ENCODE measurements at regions of chr14 and their contacts with region 1.

Region 1: DNA sequence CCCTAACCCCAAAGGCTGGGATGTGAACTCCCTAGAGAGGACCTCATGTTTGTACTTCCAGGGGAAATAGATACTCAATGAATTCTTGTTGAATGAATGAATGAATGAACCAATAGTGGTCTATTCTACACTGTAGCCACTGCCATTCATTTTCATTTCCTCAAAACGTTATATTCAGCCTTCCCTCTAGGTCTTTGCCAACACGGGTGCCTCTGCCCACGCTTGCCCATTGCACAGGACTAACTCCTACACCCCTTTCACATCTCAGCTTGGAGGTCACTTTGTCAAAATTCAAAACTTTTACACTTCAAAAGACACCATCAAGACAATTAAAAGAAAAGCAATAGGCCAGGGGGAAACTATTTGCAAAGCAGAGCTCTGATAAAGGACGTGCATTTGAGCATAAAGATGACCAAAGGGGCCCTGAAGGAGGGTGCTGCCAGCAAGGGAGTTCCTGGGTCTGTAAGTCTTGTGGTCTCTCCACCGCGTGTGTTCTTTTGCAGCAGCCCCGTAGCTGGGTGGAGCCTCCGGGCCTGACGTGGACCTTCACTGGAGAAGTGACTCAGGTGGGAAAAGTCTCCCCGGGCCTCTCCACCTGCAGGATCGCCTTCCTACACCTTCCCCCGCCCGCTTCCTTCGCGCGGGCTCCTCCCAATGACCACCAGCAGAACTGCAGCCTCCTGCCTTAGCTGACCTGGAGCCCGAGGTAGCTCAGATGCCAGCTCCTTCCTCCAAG is 31.5 kb downstream of the TMEM63C start:
- DNase-seq: no peak
- H3K4me3 ChIP-seq: no peak overlapping the region
- H3K27ac ChIP-seq: no peak overlapping the region
- H3K4me1 ChIP-seq: no peaks in the 10 kb centered on the region
- H3K27me3 ChIP-seq: peaks cover 0 to 2% of the 10 kb centered on the region in 2 experiments
- CTCF ChIP-seq: peak; percentile 41 to 71
- POLR2A ChIP-seq: no peak

Region 2: GRCh38 chr14:77133720-77134338 is 79.3 kb before region 1 on chr14:
- CTCF ChIA-PET with region 1: interaction called, 3 read pairs
- POLR2A ChIA-PET with region 1: no interaction called
- dilution Hi-C with region 1: no loop called
- intact Hi-C with region 1: loop called (anchors 2 kb)
- DNase-seq: peak; percentile 61
- H3K4me3 ChIP-seq: no peak overlapping the region
- H3K27ac ChIP-seq: no peak overlapping the region
- H3K4me1 ChIP-seq: no peaks in the 10 kb centered on the region
- H3K27me3 ChIP-seq: peaks cover 5 to 13% of the 10 kb centered on the region in 2 experiments
- CTCF ChIP-seq: no peak
- POLR2A ChIP-seq: no peak

Region 3: DNA sequence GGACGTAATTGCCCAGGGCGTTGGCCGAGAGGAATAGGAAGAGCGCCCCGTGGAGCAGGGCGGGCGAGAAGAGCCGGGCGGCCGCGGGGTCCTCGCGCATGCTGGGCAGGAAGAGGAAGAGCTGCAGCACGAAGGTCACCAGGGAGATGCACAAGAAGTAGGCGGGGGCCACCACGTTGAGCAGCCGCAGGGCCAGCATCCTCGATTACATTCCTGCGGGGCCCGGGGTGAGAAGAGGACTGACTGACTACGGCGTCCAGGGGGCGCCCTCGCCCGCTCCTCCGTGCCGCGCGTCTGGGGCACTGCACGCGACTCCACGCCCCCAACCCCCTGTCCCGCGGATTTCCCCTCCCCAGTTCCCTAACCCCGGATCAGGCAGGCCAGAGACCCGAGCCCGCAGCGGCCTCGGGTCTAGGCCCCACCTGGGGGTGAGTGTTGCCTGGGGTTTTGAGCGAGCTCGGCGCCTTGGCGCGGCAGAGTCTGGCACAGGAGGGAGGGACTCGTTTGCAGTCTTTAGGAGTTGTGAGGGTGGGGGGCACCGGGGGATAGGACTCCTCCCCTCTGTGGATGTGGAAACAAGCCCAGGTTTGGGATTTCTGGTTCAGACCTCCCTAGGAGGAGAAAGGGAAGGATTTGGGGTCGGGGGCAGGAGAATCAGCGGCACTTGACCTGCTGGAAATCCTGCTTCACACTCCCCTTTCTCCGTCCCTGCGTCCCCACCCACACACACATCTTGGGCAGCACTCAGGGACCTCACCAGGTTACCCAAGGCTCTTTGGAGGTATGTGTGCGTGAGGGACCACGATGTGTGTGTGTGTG is 73.4 kb before region 1 on chr14:
- CTCF ChIA-PET with region 1: interaction called, 5 read pairs
- POLR2A ChIA-PET with region 1: no interaction called
- dilution Hi-C with region 1: no loop called
- intact Hi-C with region 1: loop called (anchors 2 kb)
- DNase-seq: no peak
- H3K4me3 ChIP-seq: peak overlapping the region in 1 of 3 experiments; percentile 9
- H3K27ac ChIP-seq: no peak overlapping the region
- H3K4me1 ChIP-seq: peaks cover 13% of the 10 kb centered on the region
- H3K27me3 ChIP-seq: peaks cover 47 to 49% of the 10 kb centered on the region in 2 experiments
- CTCF ChIP-seq: peak; percentile 67 to 89
- POLR2A ChIP-seq: no peak

Region 4: GRCh38 chr14:77248666-77249065 is 35.6 kb after region 1 on chr14:
- CTCF ChIA-PET with region 1: no interaction called
- POLR2A ChIA-PET with region 1: no interaction called
- dilution Hi-C with region 1: no loop called
- intact Hi-C with region 1: no loop called
- DNase-seq: no peak
- H3K4me3 ChIP-seq: no peak overlapping the region
- H3K27ac ChIP-seq: no peak overlapping the region
- H3K4me1 ChIP-seq: no peaks in the 10 kb centered on the region
- H3K27me3 ChIP-seq: no peaks in the 10 kb centered on the region
- CTCF ChIP-seq: no peak
- POLR2A ChIP-seq: no peak

Region 5: DNA sequence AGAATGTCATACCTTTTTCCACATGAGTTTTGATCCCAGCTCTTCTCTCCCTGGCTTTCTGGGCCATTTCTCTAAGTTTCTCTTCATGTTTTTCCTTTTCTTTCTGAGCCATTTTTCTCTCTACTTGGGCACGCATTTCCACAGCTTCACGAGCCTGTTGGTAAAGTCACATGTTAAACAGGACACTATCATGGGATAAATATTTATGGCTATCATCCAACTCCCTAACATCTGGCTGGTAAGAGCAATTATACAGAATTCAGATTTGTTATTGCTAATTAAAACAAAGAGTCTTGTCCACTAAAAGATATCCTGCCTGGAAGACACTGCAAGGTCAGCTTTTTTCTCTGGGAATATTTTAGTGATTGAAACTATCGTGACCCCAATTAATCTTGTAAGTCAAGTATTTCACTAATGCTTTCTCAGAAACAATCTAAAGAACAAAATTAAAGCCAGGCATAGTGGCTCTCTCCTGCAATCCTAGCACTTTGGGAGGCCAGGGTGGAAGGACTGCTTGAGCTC is 517.9 kb after region 1 on chr14:
- CTCF ChIA-PET with region 1: no interaction called
- POLR2A ChIA-PET with region 1: no interaction called
- dilution Hi-C with region 1: no loop called
- intact Hi-C with region 1: no loop called
- DNase-seq: no peak
- H3K4me3 ChIP-seq: no peak overlapping the region
- H3K27ac ChIP-seq: no peak overlapping the region
- H3K4me1 ChIP-seq: no peaks in the 10 kb centered on the region
- H3K27me3 ChIP-seq: no peaks in the 10 kb centered on the region
- CTCF ChIP-seq: no peak
- POLR2A ChIP-seq: no peak

Region 6: GRCh38 chr14:77912754-77913556 is 699.8 kb after region 1 on chr14:
- CTCF ChIA-PET with region 1: no interaction called
- POLR2A ChIA-PET with region 1: no interaction called
- dilution Hi-C with region 1: no loop called
- intact Hi-C with region 1: no loop called
- DNase-seq: no peak
- H3K4me3 ChIP-seq: no peak overlapping the region
- H3K27ac ChIP-seq: no peak overlapping the region
- H3K4me1 ChIP-seq: no peaks in the 10 kb centered on the region
- H3K27me3 ChIP-seq: no peaks in the 10 kb centered on the region
- CTCF ChIP-seq: no peak
- POLR2A ChIP-seq: no peak